ENCODE measurements at regions of chr19 and their contacts with region 1.

Region 1: GRCh38 chr19:48110350-48110966 is at the start of gene PLA2G4C:
- DNase-seq: peak; percentile 95
- H3K4me3 ChIP-seq: peak within 1 kb of the TSS; percentile 39
- H3K27ac ChIP-seq: peak within 1 kb of the TSS; percentile 77
- H3K4me1 ChIP-seq: peaks cover 3% of the 10 kb centered on the region
- H3K27me3 ChIP-seq: no peaks in the 10 kb centered on the region
- CTCF ChIP-seq: no peak
- total RNA-seq, gene PLA2G4C: 4.8 and 8.2 TPM in 2 replicates

Region 2: DNA sequence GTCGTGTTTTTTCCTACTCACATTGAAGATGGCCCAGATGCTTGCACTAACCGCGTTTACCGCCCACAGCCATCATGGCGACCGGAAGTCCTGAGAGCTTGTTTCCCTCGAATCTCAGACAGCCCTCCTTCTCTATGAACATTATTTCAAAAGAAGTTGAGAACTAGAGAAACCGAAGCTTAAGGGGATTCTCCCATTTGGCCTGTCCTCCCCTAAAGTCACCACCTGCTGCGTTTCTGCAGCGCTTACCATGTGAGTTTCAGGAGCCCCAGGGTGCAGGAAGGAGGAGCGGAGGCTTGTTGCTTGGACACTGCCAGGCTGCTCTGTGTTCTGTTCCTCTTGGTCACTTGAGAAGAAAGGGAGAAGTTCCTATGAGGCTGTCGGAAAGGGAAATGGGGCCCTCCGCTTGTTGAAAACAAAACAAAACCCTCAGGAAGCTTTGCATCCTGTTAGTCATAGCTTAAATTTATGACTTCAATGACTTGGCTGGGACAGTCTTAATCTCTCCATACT is 139.1 kb after region 1 on chr19:
- CTCF ChIA-PET with region 1: no interaction called
- POLR2A ChIA-PET with region 1: no interaction called
- intact Hi-C with region 1: loop called (anchors 5 kb)
- DNase-seq: peak; percentile 98
- H3K4me3 ChIP-seq: peak overlapping the region; percentile 42
- H3K27ac ChIP-seq: peak overlapping the region; percentile 98
- H3K4me1 ChIP-seq: peaks cover 78% of the 10 kb centered on the region
- H3K27me3 ChIP-seq: no peaks in the 10 kb centered on the region
- CTCF ChIP-seq: no peak

Region 3: DNA sequence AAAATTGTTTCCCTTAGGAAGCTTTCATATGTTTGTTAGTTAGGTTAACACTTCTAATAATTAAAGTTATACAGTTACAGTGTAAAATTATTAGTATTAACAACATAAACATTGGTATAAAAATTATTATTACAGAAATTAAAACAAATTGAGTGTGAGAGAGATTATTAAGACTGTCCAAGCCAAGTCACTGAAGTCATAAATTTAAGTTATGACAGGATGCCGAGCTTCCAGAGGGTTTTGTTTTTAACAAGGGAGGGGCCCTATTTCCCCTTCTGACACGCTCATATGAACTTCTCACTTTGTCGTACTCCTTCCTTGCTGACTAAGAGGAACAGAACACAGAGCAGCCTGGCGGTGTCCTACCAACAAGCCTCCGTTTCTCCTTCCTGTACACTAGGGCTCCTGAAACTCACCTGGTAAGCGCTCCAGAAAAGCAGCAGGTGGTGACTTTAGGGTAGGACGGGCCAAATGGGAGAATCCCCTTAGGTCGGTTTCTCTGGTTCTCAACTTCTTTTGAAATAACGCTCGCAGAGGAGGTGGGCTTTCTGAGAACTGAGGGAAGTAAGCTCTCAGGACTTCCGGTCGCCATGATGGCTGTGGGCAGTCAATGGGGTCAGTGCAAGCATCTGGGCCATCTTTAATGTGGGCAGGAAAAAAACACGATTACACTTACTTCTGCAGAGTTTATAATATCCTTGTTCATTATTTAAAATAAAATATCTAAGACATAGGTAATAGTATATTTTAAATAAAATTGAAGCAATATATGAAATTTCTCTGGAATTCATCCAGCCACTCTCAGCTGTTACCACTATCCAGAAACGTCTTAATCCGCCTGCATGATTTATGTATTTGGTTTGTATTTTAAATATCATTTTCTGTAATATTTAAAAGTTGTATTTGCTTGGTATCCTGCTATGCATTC is 145.2 kb after region 1 on chr19 and contains the start of gene CARD8:
- CTCF ChIA-PET with region 1: interaction called, 5 read pairs
- POLR2A ChIA-PET with region 1: no interaction called
- intact Hi-C with region 1: loop called (anchors 1 kb)
- DNase-seq: peak; percentile 94
- H3K4me3 ChIP-seq: peak within 1 kb of the TSS; percentile 77
- H3K27ac ChIP-seq: peak within 1 kb of the TSS; percentile 97
- H3K4me1 ChIP-seq: peaks cover 48% of the 10 kb centered on the region
- H3K27me3 ChIP-seq: no peaks in the 10 kb centered on the region
- CTCF ChIP-seq: no peak
- total RNA-seq, gene CARD8: 139 and 151 TPM in 2 replicates

Measured in A673 (cell line).